ENCODE measurements at regions of chr2 and their contacts with region 1.

Region 1: DNA sequence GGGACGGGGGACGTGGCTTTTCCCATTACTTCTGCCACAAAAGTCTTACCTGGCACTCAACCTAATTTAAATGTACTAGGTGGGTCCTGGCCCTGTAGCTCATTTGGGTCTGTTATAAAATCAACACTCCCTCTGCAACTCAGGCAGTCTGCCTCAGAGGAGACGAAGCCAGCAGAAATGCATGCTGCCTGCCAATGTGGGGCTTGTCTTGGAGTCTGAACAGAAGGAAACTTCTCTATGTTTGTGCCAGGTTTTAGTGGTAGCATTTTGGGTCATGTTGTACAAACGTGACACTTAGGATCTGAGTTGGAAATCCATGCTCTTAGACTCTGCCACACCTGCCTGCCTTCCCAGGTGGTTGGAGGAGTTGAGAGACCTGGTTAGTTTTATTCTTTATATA is 292.5 kb upstream of the FAM98A start:
- DNase-seq: no peak
- ATAC-seq: no peak

Region 2: DNA sequence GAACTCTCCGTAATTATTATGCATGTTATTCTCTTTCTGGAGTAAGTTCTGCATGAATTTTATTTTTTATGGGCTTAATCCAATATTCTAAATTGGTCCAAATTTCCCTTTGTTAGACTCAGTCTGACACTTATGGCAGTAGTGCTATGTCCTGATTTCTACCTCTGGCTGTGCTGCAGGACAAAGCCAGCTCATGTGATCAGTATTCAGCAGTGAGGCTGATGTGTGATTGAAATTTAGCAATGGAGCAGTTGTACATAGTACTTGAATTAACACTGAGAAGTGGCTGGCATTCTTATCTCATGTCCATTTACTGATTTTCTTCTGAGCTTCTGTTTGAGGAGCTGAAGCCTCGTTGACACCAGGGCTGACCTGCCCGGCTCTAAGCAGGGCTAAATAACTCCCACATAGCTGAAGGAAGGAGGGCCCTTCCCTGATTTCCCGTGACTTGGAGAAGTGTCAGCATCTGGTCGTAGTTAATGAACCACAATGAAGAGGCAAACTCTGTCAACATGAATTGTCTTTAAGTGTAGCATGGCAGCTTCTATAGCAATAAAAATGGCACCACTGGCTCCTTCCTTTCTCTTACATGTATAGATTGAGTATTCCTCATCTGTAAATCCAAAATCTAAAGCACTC is 574.1 kb before region 1 on chr2:
- intact Hi-C with region 1: no loop called
- DNase-seq: no peak
- ATAC-seq: peak; percentile 55

Region 3: DNA sequence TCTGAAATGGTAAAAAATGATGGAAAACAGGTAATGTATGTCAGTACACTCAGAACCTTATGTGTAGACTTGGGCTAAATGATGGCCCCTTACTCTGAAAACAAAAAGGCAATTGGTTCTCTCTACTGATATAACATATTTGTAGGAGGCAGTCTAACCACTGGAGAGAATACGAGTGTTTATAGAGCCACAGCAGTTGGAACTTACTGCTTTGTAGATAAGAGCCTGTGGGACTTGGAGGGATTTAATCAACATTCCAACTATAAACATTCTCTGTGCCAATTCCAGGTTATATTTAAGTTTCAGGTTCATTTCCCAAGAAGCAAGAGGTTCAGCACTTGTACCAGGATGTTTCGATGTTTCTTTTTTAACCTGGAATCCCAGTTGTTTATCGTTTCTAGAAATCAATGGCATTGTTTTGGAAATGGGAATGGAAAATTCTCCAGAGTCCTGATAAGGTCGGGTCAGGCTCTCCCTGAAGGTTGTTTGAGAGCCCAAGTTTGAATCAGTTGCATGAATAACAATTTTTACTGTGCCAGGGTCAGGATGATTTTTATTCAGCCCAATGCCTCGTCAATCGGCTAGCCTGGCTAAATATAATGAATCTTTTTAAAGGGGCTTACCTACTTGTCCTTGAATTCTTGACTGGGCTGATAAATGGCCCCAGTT is 14.1 kb before region 1 on chr2:
- intact Hi-C with region 1: loop called (anchors 2 kb)
- DNase-seq: no peak
- ATAC-seq: peak; percentile 79